ENCODE measurements at regions of chr1 and their contacts with region 1.

Region 1: GRCh38 chr1:21896652-21897532 is 40.2 kb downstream of the HSPG2 start:
- DNase-seq: peak; percentile 91
- ATAC-seq: peak; percentile 84

Region 2: DNA sequence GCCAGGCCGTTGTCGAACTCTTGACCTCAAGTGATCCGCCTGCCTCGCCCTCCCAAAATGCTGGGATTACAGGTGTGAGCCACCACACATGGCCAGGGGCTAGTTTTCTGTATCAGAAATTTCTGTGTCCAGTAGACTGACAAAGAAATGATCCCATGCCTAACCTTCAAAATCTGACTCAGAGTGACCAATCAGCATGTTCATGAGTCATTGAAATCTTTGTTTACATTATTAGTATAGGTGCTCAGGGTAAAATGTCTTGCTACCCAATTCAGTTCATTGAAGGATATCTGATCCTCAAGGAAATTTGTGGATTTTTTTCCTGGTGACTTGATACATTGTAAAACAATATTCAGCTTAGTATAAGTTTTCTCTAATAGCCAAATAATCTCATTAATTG is 95.8 kb before region 1 on chr1:
- intact Hi-C with region 1: no loop called
- DNase-seq: no peak
- ATAC-seq: no peak

Region 3: DNA sequence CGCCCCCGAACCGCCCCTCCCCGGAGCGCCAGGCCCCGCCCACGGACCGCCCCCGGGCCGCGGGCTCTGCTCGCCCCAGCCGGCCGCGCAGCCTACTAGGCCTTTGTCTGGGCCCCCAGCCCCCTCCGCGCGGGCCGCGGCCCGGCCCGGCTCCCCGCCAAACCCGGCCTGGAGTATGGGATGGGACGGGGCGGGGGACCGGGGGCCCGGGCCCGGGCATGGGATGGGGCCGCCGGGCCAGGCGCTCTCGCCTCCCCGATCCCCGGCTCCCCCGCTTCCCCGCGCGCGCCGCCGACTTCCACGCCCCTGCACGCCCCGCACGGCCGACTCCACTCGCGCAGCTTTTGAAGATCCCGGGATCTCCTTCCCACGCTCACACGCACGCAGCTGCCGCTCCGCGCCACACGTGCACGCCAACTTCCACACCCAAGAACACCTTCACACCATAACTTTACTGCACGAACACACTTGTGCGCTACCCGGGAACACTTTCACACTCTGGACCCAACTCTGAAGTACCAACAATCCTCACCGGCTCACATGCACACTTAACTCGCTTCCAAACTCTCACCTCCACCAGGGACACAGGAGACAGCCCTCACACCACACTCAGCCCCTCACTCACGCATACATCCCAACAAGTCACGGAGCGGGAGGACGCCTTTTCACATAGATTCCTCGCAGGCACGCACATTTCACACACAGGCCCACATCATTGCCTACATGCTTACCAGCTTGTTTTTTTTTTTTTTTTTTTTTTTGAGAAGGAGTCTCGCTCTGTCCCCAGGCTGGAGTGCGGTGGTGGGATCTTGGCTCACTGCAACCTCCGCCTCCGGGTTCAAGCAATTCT is 40.7 kb after region 1 on chr1:
- intact Hi-C with region 1: loop called (anchors 5 kb)
- DNase-seq: peak; percentile 91
- ATAC-seq: peak; percentile 76